Psoas muscle (tissue), 8 donors: ENCODE measurements at regions of chr1 and their contacts with region 1.

Region 1: DNA sequence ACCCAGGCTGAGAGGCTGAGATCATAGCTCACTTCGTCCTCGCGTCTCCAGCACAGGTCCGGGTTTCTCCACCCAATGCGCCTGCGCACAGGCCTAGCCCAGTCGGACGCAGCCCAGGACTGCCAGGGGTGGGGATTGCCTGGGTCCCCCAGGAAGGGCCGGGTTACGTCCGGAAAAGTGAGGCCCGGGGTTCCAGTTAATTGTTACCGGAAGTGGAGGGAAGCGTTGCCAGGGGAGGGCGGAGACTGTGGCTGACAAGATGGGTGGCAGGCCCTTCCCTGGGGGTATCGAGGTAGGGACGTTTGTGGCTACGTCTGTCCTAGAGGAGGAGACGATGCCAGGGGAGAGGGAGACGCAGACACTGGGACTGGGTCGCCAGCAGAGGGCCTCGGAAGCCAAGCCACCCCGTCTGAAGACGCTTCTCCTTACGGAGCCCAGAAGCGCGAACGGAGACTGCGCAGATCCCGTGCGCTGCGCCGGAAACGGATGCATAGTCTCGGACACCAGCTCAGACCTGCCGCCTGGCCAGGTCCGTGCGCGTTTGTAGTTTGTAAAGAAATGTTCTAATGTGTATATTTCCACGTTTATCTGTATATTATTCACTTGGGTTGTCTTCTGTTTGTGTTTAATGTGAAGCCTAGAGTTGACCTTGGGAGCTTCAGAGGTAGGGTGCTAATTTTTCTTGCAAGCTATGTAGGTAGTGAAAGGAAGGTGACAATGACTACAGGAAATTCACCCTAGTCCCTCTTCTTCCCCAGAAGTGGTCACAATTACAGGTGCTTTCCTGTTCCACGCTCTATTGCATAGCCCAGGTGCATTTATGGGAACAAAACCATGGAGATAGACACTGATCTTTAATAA is 7.3 kb downstream of the RSRP1 start:
- DNase-seq: peak; percentile 93 to 97
- ATAC-seq: peak; percentile 92 to 93 (median 92)
- H3K4me3 ChIP-seq: peak overlapping the region; percentile 70
- H3K27ac ChIP-seq: peak overlapping the region; percentile 95
- H3K4me1 ChIP-seq: peaks cover 71% of the 10 kb centered on the region
- H3K27me3 ChIP-seq: no peaks in the 10 kb centered on the region
- CTCF ChIP-seq: peak; percentile 69

Region 2: GRCh38 chr1:24878775-24879742 is 360.9 kb before region 1 on chr1:
- intact Hi-C with region 1: no loop called
- DNase-seq: no peak
- ATAC-seq: no peak
- H3K4me3 ChIP-seq: no peak overlapping the region
- H3K27ac ChIP-seq: no peak overlapping the region
- H3K4me1 ChIP-seq: no peaks in the 10 kb centered on the region
- H3K27me3 ChIP-seq: peaks cover 0 to 8% (median 0%) of the 10 kb centered on the region in 3 donors
- CTCF ChIP-seq: no peak

Region 3: GRCh38 chr1:25338188-25338981 is 98.5 kb after region 1 on chr1 and contains the start of gene TMEM50A:
- intact Hi-C with region 1: loop called (anchors 5 kb)
- DNase-seq: peak; percentile 91 to 96
- ATAC-seq: peak; percentile 96 to 97 (median 97)
- H3K4me3 ChIP-seq: peak within 1 kb of the TSS; percentile 98
- H3K27ac ChIP-seq: peak within 1 kb of the TSS; percentile 99
- H3K4me1 ChIP-seq: peaks cover 21% of the 10 kb centered on the region
- H3K27me3 ChIP-seq: no peaks in the 10 kb centered on the region
- CTCF ChIP-seq: no peak
- total RNA-seq, gene TMEM50A: 37.0 to 54.9 (median 43.3) TPM

Region 4: GRCh38 chr1:25430666-25431505 is 191.0 kb after region 1 on chr1 and contains the start of gene MACO1:
- intact Hi-C with region 1: loop called in 1 of 2 experiments (anchors 5 kb)
- DNase-seq: peak; percentile 97 to 98
- ATAC-seq: peak; percentile 93 to 94 (median 93)
- H3K4me3 ChIP-seq: peak within 1 kb of the TSS; percentile 94
- H3K27ac ChIP-seq: peak within 1 kb of the TSS; percentile 95
- H3K4me1 ChIP-seq: peaks cover 38% of the 10 kb centered on the region
- H3K27me3 ChIP-seq: no peaks in the 10 kb centered on the region
- CTCF ChIP-seq: no peak
- total RNA-seq, gene MACO1: 22.7 to 49.7 (median 30.8) TPM

Region 5: DNA sequence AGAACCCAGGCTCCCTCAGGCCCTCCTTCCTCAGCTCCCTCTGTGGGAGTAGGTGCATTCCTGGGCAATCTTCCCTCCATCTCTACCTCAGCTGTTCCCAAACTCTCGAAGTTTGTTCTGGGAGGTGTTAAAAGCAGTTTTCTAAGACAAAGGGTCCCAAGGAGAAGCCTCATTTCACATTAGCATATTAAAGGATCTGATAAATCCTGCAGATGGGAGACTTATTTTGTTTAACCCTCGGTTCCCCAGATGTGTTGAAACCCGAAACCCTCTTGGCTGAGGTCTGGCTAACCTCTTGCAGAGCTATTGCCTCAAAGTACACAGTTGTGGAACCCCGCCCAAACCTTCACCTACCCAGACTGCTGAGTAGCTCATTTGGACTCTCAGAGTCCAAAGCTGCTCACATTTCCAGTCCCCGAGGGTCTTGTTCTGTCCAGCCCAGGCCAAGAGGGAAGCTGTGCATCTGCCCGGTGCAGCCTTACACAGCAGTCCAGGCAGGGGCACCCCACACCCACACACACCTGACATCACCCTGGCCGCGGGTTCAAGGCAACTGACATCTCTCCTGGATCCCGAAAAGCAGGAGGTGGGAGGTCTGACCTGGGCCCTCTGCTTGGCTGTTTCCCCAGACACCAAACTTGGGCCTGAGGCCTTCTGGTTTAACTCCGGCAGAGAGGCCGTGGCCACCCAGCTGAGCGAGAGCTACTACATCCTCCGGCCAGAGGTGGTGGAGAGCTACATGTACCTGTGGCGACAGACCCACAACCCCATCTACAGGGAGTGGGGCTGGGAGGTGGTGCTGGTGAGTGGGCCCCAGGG is 540.6 kb after region 1 on chr1:
- intact Hi-C with region 1: no loop called
- DNase-seq: no peak
- ATAC-seq: no peak
- H3K4me3 ChIP-seq: no peak overlapping the region
- H3K27ac ChIP-seq: no peak overlapping the region
- H3K4me1 ChIP-seq: peaks cover 19% of the 10 kb centered on the region
- H3K27me3 ChIP-seq: no peaks in the 10 kb centered on the region
- CTCF ChIP-seq: no peak